ENCODE measurements at regions of chr11 and their contacts with region 1.

Region 1: DNA sequence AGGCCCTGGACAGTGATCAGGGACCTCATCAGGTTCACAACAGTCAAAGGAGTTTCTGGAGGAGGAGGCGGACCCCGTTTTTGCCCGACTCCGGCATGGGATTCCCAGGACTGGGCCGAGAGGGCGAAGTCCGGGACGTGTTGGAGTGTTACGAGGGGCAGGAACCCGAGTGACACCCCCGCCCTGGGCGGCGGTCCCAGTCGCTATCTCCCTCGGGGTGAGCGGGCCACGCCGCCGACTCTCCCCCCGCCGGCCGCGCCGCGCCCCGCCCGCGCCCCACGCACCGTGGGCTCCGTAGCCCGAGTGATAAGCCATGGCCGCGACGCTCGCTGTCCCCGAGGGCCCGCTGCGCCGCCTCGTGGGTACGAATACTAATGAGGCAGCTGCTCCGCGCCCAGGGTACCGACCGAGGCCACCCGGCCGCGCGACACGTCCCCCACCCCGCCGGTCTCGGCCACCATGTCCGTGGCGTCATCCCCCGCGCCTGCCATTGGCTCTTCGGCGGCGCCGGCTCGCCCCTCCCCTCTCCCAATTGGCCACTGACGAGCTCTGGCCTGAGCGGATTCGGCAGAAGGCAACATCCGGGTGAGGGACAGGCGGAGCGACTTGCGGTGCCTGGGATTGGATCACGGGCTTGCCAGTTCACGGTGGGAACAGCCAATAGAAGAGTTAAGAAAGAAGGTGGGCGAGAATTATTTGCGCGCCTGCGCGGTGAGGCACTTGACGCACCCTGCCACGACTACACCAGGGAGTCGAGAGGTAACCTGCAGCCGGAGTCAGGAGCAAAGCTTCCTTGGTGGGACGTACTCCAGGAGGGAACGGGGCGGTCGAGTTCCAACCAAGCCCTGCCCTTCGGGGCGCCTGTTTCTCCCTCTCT is at the start of gene YIF1A:
- DNase-seq: peak; percentile 99
- ATAC-seq: peak; percentile 90
- H3K4me3 ChIP-seq: peak within 1 kb of the TSS; percentile 79 to 95 (median 88)
- H3K27ac ChIP-seq: peak within 1 kb of the TSS; percentile 97
- H3K4me1 ChIP-seq: peaks cover 61% of the 10 kb centered on the region
- H3K27me3 ChIP-seq: peaks cover 0 to 22% of the 10 kb centered on the region in 2 experiments; a peak in 4 of 5 replicates
- CTCF ChIP-seq: peak; percentile 61
- EP300 ChIP-seq: no peak
- POLR2A ChIP-seq: peak in 1 of 2 experiments; percentile 93; a peak in 2 of 4 replicates
- RAD21 ChIP-seq: peak; percentile 63; the same call in 1 of the 2 replicates
- total RNA-seq, gene YIF1A: 78.9 and 145 TPM in 2 replicates

Region 2: GRCh38 chr11:66136752-66137123 is 152.2 kb before region 1 on chr11:
- CTCF ChIA-PET with region 1: no interaction called
- POLR2A ChIA-PET with region 1: no interaction called
- in situ Hi-C with region 1: no loop called
- intact Hi-C with region 1: no loop called
- DNase-seq: peak; percentile 37
- ATAC-seq: no peak
- H3K4me3 ChIP-seq: no peak overlapping the region
- H3K27ac ChIP-seq: no peak overlapping the region
- H3K4me1 ChIP-seq: peaks cover 38% of the 10 kb centered on the region
- H3K27me3 ChIP-seq: no peaks in the 10 kb centered on the region
- CTCF ChIP-seq: no peak
- EP300 ChIP-seq: peak in 1 of 2 experiments; percentile 16; a peak in 1 of 4 replicates
- POLR2A ChIP-seq: no peak
- RAD21 ChIP-seq: no peak

Region 3: GRCh38 chr11:66268283-66268951 is 20.5 kb before region 1 on chr11 and contains the start of gene RAB1B:
- CTCF ChIA-PET with region 1: no interaction called
- POLR2A ChIA-PET with region 1: interaction called, 31 read pairs
- in situ Hi-C with region 1: no loop called
- intact Hi-C with region 1: loop called (anchors 2 kb)
- DNase-seq: peak; percentile 98
- ATAC-seq: peak; percentile 87
- H3K4me3 ChIP-seq: peak within 1 kb of the TSS; percentile 89 to 98 (median 96)
- H3K27ac ChIP-seq: peak within 1 kb of the TSS; percentile 78
- H3K4me1 ChIP-seq: peaks cover 13% of the 10 kb centered on the region
- H3K27me3 ChIP-seq: no peaks in the 10 kb centered on the region; a peak in 1 of 5 replicates
- CTCF ChIP-seq: no peak
- EP300 ChIP-seq: no peak
- POLR2A ChIP-seq: peak; percentile 42 to 62; a peak in 3 of 4 replicates
- RAD21 ChIP-seq: peak; percentile 27; the same call in 1 of the 2 replicates
- total RNA-seq, gene RAB1B: 73.7 and 77.9 TPM in 2 replicates

Region 4: DNA sequence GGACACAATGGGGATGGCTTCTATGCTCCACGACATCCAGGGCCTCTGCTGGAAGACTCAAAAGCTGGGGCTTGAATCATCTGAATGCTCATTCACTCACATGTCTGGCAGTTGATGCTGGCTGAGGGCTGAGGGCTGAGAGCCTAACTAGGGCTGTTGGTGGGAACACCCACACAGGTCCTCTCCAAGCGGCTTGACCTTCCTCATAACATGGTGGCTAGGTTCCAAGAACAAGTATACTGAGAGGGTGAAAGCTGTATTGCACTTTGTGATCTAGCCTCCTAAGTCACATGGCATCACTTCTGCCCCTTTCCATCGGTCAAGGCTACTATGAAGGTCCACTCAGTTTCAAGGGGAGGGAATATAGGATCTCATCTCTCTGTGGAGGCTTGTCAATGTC is 10.3 kb after region 1 on chr11:
- CTCF ChIA-PET with region 1: no interaction called
- POLR2A ChIA-PET with region 1: interaction called, 10 read pairs
- in situ Hi-C with region 1: no loop called
- intact Hi-C with region 1: no loop called
- DNase-seq: no peak
- ATAC-seq: peak; percentile 20; the same call in 1 of the 3 replicates
- H3K4me3 ChIP-seq: no peak overlapping the region
- H3K27ac ChIP-seq: no peak overlapping the region
- H3K4me1 ChIP-seq: 0 out of 2 replicates have a peak, but pooled peaks cover 6% of the 10 kb centered on the region
- H3K27me3 ChIP-seq: peaks cover 3 to 19% of the 10 kb centered on the region in 2 experiments; a peak in 4 of 5 replicates
- CTCF ChIP-seq: no peak
- EP300 ChIP-seq: no peak
- POLR2A ChIP-seq: no peak
- RAD21 ChIP-seq: no peak

Region 5: GRCh38 chr11:66317723-66318599 is 29.1 kb after region 1 on chr11:
- CTCF ChIA-PET with region 1: no interaction called
- POLR2A ChIA-PET with region 1: interaction called, 121 read pairs
- in situ Hi-C with region 1: no loop called
- intact Hi-C with region 1: no loop called
- DNase-seq: peak; percentile 70
- ATAC-seq: peak; percentile 10
- H3K4me3 ChIP-seq: peak overlapping the region; percentile 11 to 66 (median 24)
- H3K27ac ChIP-seq: peak overlapping the region; percentile 32
- H3K4me1 ChIP-seq: peaks cover 50% of the 10 kb centered on the region
- H3K27me3 ChIP-seq: 0 out of 5 replicates have a peak, but pooled peaks cover 0 to 6% of the 10 kb centered on the region in 2 experiments
- CTCF ChIP-seq: no peak
- EP300 ChIP-seq: peak in 1 of 2 experiments; percentile 18; a peak in 1 of 4 replicates
- POLR2A ChIP-seq: no peak
- RAD21 ChIP-seq: peak; percentile 6; the same call in 1 of the 2 replicates

Region 6: GRCh38 chr11:66328307-66329144 is 39.6 kb after region 1 on chr11:
- CTCF ChIA-PET with region 1: no interaction called
- POLR2A ChIA-PET with region 1: interaction called, 7 read pairs
- in situ Hi-C with region 1: loop called (anchors 5 kb)
- intact Hi-C with region 1: no loop called
- DNase-seq: peak; percentile 71
- ATAC-seq: peak; percentile 85
- H3K4me3 ChIP-seq: peak overlapping the region; percentile 36 to 76 (median 47)
- H3K27ac ChIP-seq: peak overlapping the region; percentile 45
- H3K4me1 ChIP-seq: peaks cover 57% of the 10 kb centered on the region
- H3K27me3 ChIP-seq: peaks cover 0 to 17% of the 10 kb centered on the region in 2 experiments; a peak in 3 of 5 replicates
- CTCF ChIP-seq: peak; percentile 97
- EP300 ChIP-seq: no peak
- POLR2A ChIP-seq: no peak
- RAD21 ChIP-seq: peak; percentile 87

Region 7: DNA sequence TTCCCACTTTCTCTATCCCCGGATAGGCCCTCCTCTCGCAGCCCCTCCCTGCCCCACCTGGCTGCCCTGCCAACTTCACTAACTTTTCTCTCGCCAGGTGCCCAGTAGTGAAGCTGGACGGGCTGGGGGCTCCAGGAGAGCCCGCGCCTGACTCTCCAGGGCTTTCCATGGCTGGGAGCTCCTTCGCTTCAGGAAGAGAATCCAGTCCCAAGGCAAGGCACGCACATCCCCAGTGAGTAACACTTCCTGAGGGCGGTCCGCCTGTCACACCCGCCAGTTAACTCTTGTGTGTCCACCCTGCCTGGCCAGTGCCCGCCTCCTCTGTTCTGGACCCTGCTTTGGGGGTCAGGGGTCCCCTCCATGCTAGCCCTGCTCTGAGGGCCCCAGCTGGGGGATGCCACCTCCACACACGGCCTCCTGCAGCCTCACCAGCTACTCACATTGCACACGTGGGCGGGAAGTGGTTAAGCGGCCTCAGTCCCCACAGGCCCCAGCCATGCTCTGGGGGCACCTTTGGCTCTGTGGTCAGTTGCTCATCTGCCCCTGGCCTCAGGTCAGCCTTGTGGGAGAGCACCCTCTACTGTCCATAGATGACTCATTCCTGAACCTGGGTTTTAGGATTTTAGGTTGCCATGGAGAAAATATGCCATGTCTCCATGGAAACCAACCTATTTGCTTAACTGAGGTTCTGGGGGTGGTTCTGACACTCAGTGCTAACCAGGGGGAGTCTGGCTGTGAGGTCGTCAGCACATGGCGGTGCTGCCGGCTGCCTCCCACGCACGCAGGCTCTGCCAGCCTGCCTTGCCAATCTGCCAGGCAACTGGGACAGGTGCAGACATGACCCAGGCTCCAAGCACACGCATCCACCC is 47.6 kb after region 1 on chr11 and contains the start of gene RIN1:
- CTCF ChIA-PET with region 1: no interaction called
- POLR2A ChIA-PET with region 1: interaction called, 10 read pairs
- in situ Hi-C with region 1: no loop called
- intact Hi-C with region 1: no loop called
- DNase-seq: peak; percentile 89
- ATAC-seq: peak; percentile 91
- H3K4me3 ChIP-seq: peak within 1 kb of the TSS; percentile 64 to 79 (median 70)
- H3K27ac ChIP-seq: peak within 1 kb of the TSS; percentile 63
- H3K4me1 ChIP-seq: peaks cover 19% of the 10 kb centered on the region
- H3K27me3 ChIP-seq: no peaks in the 10 kb centered on the region
- CTCF ChIP-seq: peak; percentile 95
- EP300 ChIP-seq: peak; percentile 11 to 74; a peak in 2 of 4 replicates
- POLR2A ChIP-seq: 0 out of 4 replicates have a peak, but pooled peaks of 1 of the 2 experiments have one; percentile 29
- RAD21 ChIP-seq: peak; percentile 94
- total RNA-seq, gene RIN1: 3.9 and 4.1 TPM in 2 replicates